Natural killer cell (primary cell): ENCODE measurements at regions of chr4 and their contacts with region 1.

Region 1: DNA sequence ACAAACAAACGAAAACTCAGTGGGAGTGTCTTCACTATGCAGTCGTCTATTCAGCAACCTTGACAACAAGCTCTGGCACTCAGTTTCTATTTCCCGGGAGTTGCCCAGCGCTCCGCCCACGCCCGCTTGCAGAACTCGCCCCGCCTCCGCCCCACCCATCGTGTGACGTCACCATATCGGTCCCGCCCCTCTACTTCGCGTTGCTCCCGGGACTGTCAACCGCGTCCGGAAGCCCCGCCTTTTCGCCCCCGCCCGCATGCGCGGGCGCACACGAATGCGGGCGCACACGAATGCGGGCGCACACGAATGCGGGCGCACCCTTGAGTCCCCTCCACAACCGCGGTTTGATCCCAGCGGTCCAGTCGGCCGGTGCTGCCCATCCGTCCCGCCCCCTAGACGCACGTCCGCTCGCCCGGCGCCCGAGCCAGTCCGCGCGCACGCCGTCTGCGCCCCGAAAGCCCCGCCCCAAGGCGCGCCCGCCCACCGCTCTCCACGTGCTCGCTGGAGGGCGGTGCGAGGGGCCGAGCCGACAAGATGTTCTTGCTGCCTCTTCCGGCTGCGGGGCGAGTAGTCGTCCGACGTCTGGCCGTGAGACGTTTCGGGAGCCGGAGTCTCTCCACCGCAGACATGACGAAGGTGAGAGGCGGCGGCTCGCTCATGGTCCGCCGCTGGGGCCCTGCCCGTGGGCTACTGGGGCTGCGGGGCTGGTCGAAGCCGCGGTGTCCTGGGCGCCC is at the start of gene LAP3:
- DNase-seq: peak; percentile 99 to 100
- ATAC-seq: peak; percentile 85 to 96 (median 87)
- H3K4me3 ChIP-seq: peak within 1 kb of the TSS; percentile 86
- H3K4me3 Mint-ChIP-seq: peak within 1 kb of the TSS; percentile 96
- H3K27ac ChIP-seq: peak within 1 kb of the TSS; percentile 96
- H3K27ac Mint-ChIP-seq: peak within 1 kb of the TSS; percentile 97 to 98
- H3K4me1 ChIP-seq: peaks cover 19% of the 10 kb centered on the region
- H3K4me1 Mint-ChIP-seq: peaks cover 20 to 24% of the 10 kb centered on the region in 2 donors
- H3K27me3 ChIP-seq: no peaks in the 10 kb centered on the region
- H3K27me3 Mint-ChIP-seq: no peaks in the 10 kb centered on the region
- CTCF ChIP-seq: no peak
- total RNA-seq, gene LAP3: 68.2 to 76.1 (median 71.6) TPM

Region 2: GRCh38 chr4:15756361-15756861 is 1820.7 kb before region 1 on chr4:
- intact Hi-C with region 1: loop called (anchors 5 kb)
- DNase-seq: peak; percentile 68 to 91
- ATAC-seq: peak; percentile 85 to 95 (median 91)
- H3K4me3 ChIP-seq: peak overlapping the region; percentile 11
- H3K4me3 Mint-ChIP-seq: peak overlapping the region; percentile 90
- H3K27ac ChIP-seq: peak overlapping the region; percentile 40
- H3K27ac Mint-ChIP-seq: peak overlapping the region; percentile 79 to 88
- H3K4me1 ChIP-seq: peaks cover 36% of the 10 kb centered on the region
- H3K4me1 Mint-ChIP-seq: peaks cover 48 to 49% of the 10 kb centered on the region in 2 donors
- H3K27me3 ChIP-seq: no peaks in the 10 kb centered on the region
- H3K27me3 Mint-ChIP-seq: peaks cover 0 to 4% of the 10 kb centered on the region in 2 donors
- CTCF ChIP-seq: peak; percentile 65

Region 3: DNA sequence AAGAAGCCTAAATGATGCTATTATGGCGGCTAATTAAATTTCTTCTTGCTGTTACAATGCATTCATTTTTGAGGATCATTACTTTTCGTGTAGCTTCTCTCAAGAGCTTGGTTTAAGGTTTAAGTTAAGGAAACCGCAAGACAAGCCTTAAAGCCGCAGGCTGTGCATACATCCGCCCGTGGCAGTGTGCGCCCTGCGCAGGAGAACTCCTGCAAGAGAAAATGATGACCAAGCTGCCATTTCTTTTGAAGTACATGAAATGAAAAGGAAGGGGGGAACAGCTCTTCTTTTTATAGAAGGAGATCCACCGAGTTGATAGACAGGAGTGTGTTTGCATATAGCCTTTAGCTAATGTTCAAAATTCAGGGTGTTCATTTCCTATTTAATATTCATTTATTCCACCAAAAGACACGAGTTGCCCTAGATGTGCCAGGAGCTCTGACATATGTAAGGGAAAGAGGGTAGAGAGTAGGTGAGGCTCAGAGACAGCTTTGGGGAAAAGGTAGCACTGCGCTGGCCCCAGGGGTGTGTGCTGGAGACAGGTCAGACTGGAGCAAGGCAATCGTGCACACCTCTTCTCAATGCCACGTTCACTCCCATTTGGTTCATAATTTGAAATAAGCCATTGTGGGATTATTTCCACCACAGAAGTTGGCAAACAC is 566.5 kb before region 1 on chr4:
- intact Hi-C with region 1: no loop called
- DNase-seq: no peak
- ATAC-seq: no peak
- H3K4me3 ChIP-seq: no peak overlapping the region
- H3K4me3 Mint-ChIP-seq: no peak overlapping the region
- H3K27ac ChIP-seq: no peak overlapping the region
- H3K27ac Mint-ChIP-seq: no peak overlapping the region
- H3K4me1 ChIP-seq: no peaks in the 10 kb centered on the region
- H3K4me1 Mint-ChIP-seq: no peaks in the 10 kb centered on the region
- H3K27me3 ChIP-seq: no peaks in the 10 kb centered on the region
- H3K27me3 Mint-ChIP-seq: no peaks in the 10 kb centered on the region
- CTCF ChIP-seq: no peak

Region 4: GRCh38 chr4:17124767-17125166 is 452.3 kb before region 1 on chr4:
- intact Hi-C with region 1: no loop called
- DNase-seq: no peak
- ATAC-seq: no peak
- H3K4me3 ChIP-seq: no peak overlapping the region
- H3K4me3 Mint-ChIP-seq: no peak overlapping the region
- H3K27ac ChIP-seq: no peak overlapping the region
- H3K27ac Mint-ChIP-seq: no peak overlapping the region
- H3K4me1 ChIP-seq: no peaks in the 10 kb centered on the region
- H3K4me1 Mint-ChIP-seq: no peaks in the 10 kb centered on the region
- H3K27me3 ChIP-seq: no peaks in the 10 kb centered on the region
- H3K27me3 Mint-ChIP-seq: no peaks in the 10 kb centered on the region
- CTCF ChIP-seq: no peak

Region 5: DNA sequence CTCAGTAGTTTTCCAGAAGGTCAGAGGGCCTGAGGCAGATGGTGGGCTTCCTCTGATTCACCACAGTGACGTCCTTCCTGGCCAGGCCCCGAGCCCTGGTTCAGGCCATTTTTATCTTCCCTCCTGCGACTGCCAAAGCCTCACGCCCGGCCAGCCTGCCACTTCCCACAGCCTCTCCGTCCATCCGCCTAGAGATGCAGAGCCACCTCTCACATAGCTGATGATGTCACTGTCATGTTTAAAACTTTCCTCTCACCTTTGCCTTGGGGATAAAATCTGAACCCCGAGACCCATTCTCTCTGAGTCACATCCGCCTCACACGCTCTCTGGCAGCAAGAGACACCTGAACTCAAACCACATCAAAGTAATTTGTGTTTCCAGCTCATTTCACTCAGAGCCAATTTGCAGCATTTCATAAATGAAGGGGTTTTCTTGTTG is 240.6 kb before region 1 on chr4:
- intact Hi-C with region 1: no loop called
- DNase-seq: peak in 1 of 2 donors; percentile 89
- ATAC-seq: peak in 2 of 3 donors; percentile 70 to 74
- H3K4me3 ChIP-seq: no peak overlapping the region
- H3K4me3 Mint-ChIP-seq: peak overlapping the region; percentile 25
- H3K27ac ChIP-seq: no peak overlapping the region
- H3K27ac Mint-ChIP-seq: peak overlapping the region; percentile 30 to 62
- H3K4me1 ChIP-seq: peaks cover 7% of the 10 kb centered on the region
- H3K4me1 Mint-ChIP-seq: peaks cover 6 to 11% of the 10 kb centered on the region in 2 donors
- H3K27me3 ChIP-seq: no peaks in the 10 kb centered on the region
- H3K27me3 Mint-ChIP-seq: peaks cover 0 to 14% of the 10 kb centered on the region in 2 donors
- CTCF ChIP-seq: no peak

Region 6: GRCh38 chr4:17614416-17615299 is 37.6 kb after region 1 on chr4 and contains the start of gene MED28:
- intact Hi-C with region 1: loop called (anchors 1 kb)
- DNase-seq: peak; percentile 93 to 99
- ATAC-seq: peak; percentile 89 to 96 (median 94)
- H3K4me3 ChIP-seq: peak within 1 kb of the TSS; percentile 96
- H3K4me3 Mint-ChIP-seq: peak within 1 kb of the TSS; percentile 98
- H3K27ac ChIP-seq: peak within 1 kb of the TSS; percentile 85
- H3K27ac Mint-ChIP-seq: peak within 1 kb of the TSS; percentile 97 to 98
- H3K4me1 ChIP-seq: peaks cover 34% of the 10 kb centered on the region
- H3K4me1 Mint-ChIP-seq: peaks cover 34 to 37% of the 10 kb centered on the region in 2 donors
- H3K27me3 ChIP-seq: no peaks in the 10 kb centered on the region
- H3K27me3 Mint-ChIP-seq: no peaks in the 10 kb centered on the region
- CTCF ChIP-seq: peak; percentile 25
- total RNA-seq, gene MED28: 44.8 to 63.3 (median 51.1) TPM

Region 7: DNA sequence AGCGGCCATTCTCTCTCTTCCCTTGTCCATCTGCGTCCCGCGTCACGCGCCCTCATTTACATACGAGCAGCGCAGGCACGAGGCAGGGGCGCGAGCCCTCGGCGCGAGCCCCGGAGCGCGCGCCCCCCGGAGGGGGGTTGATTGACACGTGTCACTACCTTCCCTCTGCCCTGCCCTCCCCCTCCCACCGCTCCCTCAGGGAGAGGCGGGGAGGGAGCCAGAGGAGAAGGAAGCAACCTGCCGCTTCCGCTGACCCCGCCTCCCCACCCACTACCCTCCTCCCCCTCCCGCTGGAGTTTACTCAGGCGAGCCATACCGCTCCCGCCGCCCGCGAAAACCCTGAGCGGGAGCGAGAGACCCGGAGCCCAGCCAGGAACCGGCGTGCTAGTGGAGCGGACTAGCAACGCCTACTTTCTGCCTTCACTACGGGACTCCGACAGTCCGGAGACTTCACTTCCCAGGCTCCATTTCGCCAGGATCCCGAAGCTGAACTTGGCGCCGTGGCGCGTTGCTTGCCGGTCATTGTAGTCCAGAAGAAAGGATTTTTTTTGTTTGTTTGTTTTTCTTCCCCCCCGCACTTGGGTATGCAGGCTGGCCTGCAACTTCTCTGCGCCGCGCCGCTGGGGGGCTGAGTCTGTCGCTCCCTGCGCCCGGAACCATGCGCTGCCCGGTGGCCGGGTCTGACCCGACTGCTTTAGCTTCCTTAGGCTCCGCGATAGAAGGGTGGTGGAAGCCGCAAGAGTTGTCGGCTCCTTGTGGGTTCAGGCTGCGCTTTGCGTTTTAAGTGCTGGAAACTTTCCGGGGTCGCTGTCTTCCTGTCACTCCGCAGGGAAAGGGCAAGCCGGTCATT is 444.8 kb after region 1 on chr4 and contains the start of gene LCORL:
- intact Hi-C with region 1: loop called (anchors 2 kb)
- DNase-seq: peak; percentile 83 to 94
- ATAC-seq: peak; percentile 79 to 91 (median 83)
- H3K4me3 ChIP-seq: peak within 1 kb of the TSS; percentile 79
- H3K4me3 Mint-ChIP-seq: peak within 1 kb of the TSS; percentile 98
- H3K27ac ChIP-seq: peak within 1 kb of the TSS; percentile 84
- H3K27ac Mint-ChIP-seq: peak within 1 kb of the TSS; percentile 83 to 97
- H3K4me1 ChIP-seq: peaks cover 16% of the 10 kb centered on the region
- H3K4me1 Mint-ChIP-seq: peaks cover 24 to 27% of the 10 kb centered on the region in 2 donors
- H3K27me3 ChIP-seq: no peaks in the 10 kb centered on the region
- H3K27me3 Mint-ChIP-seq: peaks cover 0 to 3% of the 10 kb centered on the region in 2 donors
- CTCF ChIP-seq: no peak
- total RNA-seq, gene LCORL: 19.9 to 28.4 (median 26.4) TPM